Activated B cell treated with CpG ODN at 0.5 μM for 24 hours (primary cell): ENCODE measurements at regions of chr3 and their contacts with region 1.

Region 1: GRCh38 chr3:32154205-32154579 is 47.8 kb downstream of the GPD1L start:
- DNase-seq: no peak
- ATAC-seq: no peak
- H3K4me3 Mint-ChIP-seq: no peak overlapping the region
- H3K27ac Mint-ChIP-seq: no peak overlapping the region
- H3K4me1 Mint-ChIP-seq: no peaks in the 10 kb centered on the region
- H3K27me3 Mint-ChIP-seq: no peaks in the 10 kb centered on the region
- CTCF ChIP-seq: no peak

Region 2: GRCh38 chr3:31839144-31839917 is 314.9 kb before region 1 on chr3:
- CTCF ChIA-PET with region 1: no interaction called
- POLR2A ChIA-PET with region 1: interaction called, 15 read pairs
- intact Hi-C with region 1: no loop called
- DNase-seq: no peak
- ATAC-seq: no peak
- H3K4me3 Mint-ChIP-seq: no peak overlapping the region
- H3K27ac Mint-ChIP-seq: no peak overlapping the region
- H3K4me1 Mint-ChIP-seq: peaks cover 45% of the 10 kb centered on the region
- H3K27me3 Mint-ChIP-seq: no peaks in the 10 kb centered on the region
- CTCF ChIP-seq: no peak

Region 3: GRCh38 chr3:33537133-33537532 is 1382.9 kb after region 1 on chr3:
- CTCF ChIA-PET with region 1: no interaction called
- POLR2A ChIA-PET with region 1: no interaction called
- intact Hi-C with region 1: no loop called
- DNase-seq: no peak
- ATAC-seq: no peak
- H3K4me3 Mint-ChIP-seq: no peak overlapping the region
- H3K27ac Mint-ChIP-seq: no peak overlapping the region
- H3K4me1 Mint-ChIP-seq: peaks cover 16% of the 10 kb centered on the region
- H3K27me3 Mint-ChIP-seq: no peaks in the 10 kb centered on the region
- CTCF ChIP-seq: no peak